ENCODE measurements at regions of chr11 and their contacts with region 1.

Region 1: DNA sequence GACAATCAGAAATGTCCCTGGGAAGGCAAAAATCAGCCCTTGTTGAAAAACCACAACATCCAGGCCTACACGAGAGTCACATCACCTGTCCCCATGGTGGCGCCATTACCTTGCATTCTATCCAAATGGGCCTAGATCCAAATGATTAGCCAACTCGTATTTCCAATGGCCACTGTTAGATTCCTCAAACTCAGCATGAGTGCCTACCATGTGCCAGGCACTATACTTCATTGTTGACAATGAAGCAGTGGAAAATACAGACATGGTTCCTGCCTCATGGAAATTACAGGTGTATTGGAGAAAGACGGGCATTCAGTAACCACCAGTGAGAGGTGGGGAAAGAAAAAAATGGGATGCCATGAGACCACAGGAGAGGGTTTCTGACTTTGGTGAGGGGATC is 29.8 kb upstream of the CREB3L1 start:
- DNase-seq: peak; percentile 83
- H3K4me3 ChIP-seq: no peak overlapping the region
- H3K4me3 Mint-ChIP-seq: peak overlapping the region; percentile 10
- H3K27ac Mint-ChIP-seq: peak overlapping the region; percentile 98
- H3K4me1 ChIP-seq: peaks cover 53% of the 10 kb centered on the region
- H3K4me1 Mint-ChIP-seq: peaks cover 56% of the 10 kb centered on the region
- H3K27me3 ChIP-seq: no peaks in the 10 kb centered on the region
- H3K27me3 Mint-ChIP-seq: no peaks in the 10 kb centered on the region
- CTCF ChIP-seq: peak; percentile 69 to 81

Region 2: GRCh38 chr11:46160100-46160499 is 87.6 kb before region 1 on chr11:
- CTCF ChIA-PET with region 1: interaction called, 16 read pairs
- POLR2A ChIA-PET with region 1: no interaction called
- intact Hi-C with region 1: no loop called
- DNase-seq: peak in 1 of 2 experiments; percentile 24
- H3K4me3 ChIP-seq: no peak overlapping the region
- H3K4me3 Mint-ChIP-seq: no peak overlapping the region
- H3K27ac Mint-ChIP-seq: no peak overlapping the region
- H3K4me1 ChIP-seq: peaks cover 23% of the 10 kb centered on the region
- H3K4me1 Mint-ChIP-seq: peaks cover 17% of the 10 kb centered on the region
- H3K27me3 ChIP-seq: no peaks in the 10 kb centered on the region
- H3K27me3 Mint-ChIP-seq: peaks cover 12% of the 10 kb centered on the region
- CTCF ChIP-seq: peak in 1 of 2 experiments; percentile 19

Region 3: DNA sequence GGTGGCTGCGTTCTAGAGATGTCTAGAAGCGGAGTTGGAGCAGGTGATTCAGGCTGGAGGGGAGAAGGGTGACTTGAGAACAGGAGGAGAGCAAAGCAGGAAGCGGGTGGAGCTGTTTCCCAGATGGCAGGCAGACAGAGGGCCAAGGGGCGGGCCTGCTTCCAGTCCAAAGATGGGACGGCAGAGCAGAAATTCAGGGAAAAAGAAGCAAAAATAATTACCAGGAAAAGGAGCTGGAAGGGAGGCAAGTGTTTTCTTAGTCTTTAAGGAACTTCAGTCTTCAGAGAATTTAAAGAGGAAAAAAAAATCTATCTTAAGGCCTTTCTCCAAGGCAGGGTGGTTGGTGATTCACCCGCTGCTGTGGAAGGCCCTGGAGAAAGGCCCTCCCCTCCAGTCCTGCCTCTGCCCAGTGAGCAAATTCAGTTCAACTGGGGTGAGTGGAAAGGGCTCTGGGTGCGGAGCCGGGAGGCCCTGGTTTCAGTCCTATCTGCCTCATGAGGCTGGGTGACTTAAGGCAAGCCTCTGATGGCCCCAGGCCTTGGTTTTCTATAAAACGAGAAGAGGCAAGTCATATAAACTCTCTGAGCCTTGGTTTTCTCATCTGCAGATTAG is 25.3 kb after region 1 on chr11:
- CTCF ChIA-PET with region 1: interaction called, 6 read pairs
- POLR2A ChIA-PET with region 1: interaction called, 23 read pairs
- intact Hi-C with region 1: loop called (anchors 1 kb)
- DNase-seq: no peak
- H3K4me3 ChIP-seq: no peak overlapping the region
- H3K4me3 Mint-ChIP-seq: peak overlapping the region; percentile 26
- H3K27ac Mint-ChIP-seq: peak overlapping the region; percentile 82
- H3K4me1 ChIP-seq: peaks cover 71% of the 10 kb centered on the region
- H3K4me1 Mint-ChIP-seq: peaks cover 57% of the 10 kb centered on the region
- H3K27me3 ChIP-seq: no peaks in the 10 kb centered on the region
- H3K27me3 Mint-ChIP-seq: no peaks in the 10 kb centered on the region
- CTCF ChIP-seq: no peak

Region 4: DNA sequence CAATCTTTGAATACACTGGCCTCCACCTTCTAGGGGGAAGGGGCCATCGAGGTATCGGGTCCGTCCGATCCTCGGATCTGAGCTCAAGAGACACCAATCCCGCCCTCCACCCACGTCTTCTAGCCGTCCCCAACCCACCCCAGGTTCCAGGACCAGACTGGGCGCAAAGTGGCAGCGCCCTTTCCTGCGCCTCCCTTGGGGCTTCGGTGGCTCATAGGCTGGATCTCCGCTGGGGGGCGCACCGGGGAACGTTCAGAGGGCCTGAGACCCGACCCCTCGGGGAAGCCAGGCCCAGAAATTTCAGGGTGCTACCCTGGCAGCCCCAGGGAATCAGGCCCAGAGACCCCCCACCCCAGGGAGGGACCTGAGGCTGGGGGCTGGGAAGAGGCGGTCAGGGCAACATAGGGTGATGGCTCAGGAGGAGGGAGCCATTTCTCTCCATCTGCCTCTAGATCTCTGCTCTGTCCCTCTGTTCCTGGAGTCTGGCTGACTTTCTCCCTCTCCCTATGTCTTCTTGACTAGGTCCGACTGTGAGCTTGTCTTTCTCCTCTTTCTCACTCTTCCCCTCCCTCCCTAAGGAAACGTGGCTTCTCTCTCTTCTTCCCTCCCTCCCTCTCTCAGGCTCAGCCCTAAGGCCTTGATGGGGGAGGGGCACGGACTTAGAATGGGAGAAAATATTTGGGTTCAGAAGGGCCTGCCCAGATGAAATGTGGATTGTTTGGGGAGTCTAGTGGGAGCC is 30.9 kb after region 1 on chr11:
- CTCF ChIA-PET with region 1: interaction called, 6 read pairs
- POLR2A ChIA-PET with region 1: interaction called, 23 read pairs
- intact Hi-C with region 1: loop called (anchors 1 kb)
- DNase-seq: peak; percentile 62 to 74
- H3K4me3 ChIP-seq: peak overlapping the region; percentile 85
- H3K4me3 Mint-ChIP-seq: peak overlapping the region; percentile 89
- H3K27ac Mint-ChIP-seq: peak overlapping the region; percentile 20
- H3K4me1 ChIP-seq: peaks cover 57% of the 10 kb centered on the region
- H3K4me1 Mint-ChIP-seq: peaks cover 60% of the 10 kb centered on the region
- H3K27me3 ChIP-seq: no peaks in the 10 kb centered on the region
- H3K27me3 Mint-ChIP-seq: no peaks in the 10 kb centered on the region
- CTCF ChIP-seq: peak; percentile 63 to 82

Region 5: GRCh38 chr11:46308631-46309419 is 61.2 kb after region 1 on chr11:
- CTCF ChIA-PET with region 1: interaction called, 181 read pairs
- POLR2A ChIA-PET with region 1: interaction called, 6 read pairs
- intact Hi-C with region 1: loop called (anchors 1 kb)
- DNase-seq: peak; percentile 86
- H3K4me3 ChIP-seq: no peak overlapping the region
- H3K4me3 Mint-ChIP-seq: no peak overlapping the region
- H3K27ac Mint-ChIP-seq: peak overlapping the region; percentile 17
- H3K4me1 ChIP-seq: peaks cover 16% of the 10 kb centered on the region
- H3K4me1 Mint-ChIP-seq: peaks cover 27% of the 10 kb centered on the region
- H3K27me3 ChIP-seq: no peaks in the 10 kb centered on the region
- H3K27me3 Mint-ChIP-seq: no peaks in the 10 kb centered on the region
- CTCF ChIP-seq: peak; percentile 96 to 97

Region 6: DNA sequence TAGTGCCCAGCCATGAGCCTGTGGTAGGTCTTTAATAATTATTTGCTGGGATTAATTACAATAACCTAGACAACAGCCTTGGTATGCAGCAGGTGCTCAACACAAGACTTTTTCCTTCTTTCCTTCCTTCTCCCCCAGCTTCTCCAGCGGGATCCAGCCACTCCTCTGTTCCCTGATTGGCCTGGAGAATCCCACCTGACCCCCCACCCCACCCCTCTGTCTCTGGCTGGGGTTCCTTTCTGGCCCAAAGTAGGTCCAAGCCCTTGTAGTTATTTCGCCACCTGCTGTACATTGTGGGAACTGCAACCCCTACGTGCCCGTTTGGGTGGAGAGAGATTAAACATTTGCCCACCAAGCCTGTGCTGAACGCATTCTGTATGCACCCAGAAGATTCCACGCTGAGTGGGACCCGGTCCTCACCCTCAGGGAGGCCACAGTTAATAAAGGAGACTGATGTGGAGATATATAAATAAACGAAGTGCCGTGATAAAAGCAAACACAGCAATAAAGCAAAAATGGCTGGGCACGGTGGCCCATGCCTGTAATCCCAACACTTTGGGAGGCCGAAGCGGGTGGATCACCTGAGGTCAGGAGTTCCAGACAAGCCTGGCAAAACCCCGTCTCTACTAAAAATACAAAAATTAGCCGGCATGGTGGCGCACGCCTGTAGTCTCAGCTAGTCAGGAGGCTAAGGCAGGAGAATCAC is 67.5 kb after region 1 on chr11:
- CTCF ChIA-PET with region 1: interaction called, 181 read pairs
- POLR2A ChIA-PET with region 1: no interaction called
- intact Hi-C with region 1: loop called (anchors 1 kb)
- DNase-seq: peak; percentile 85 to 87
- H3K4me3 ChIP-seq: no peak overlapping the region
- H3K4me3 Mint-ChIP-seq: no peak overlapping the region
- H3K27ac Mint-ChIP-seq: peak overlapping the region; percentile 14
- H3K4me1 ChIP-seq: no peaks in the 10 kb centered on the region
- H3K4me1 Mint-ChIP-seq: no peaks in the 10 kb centered on the region
- H3K27me3 ChIP-seq: no peaks in the 10 kb centered on the region
- H3K27me3 Mint-ChIP-seq: no peaks in the 10 kb centered on the region
- CTCF ChIP-seq: peak; percentile 92 to 97

Measured in Caco-2 (cell line).